Natural killer cell (primary cell): ENCODE measurements at regions of chr3 and their contacts with region 1.

Region 1: GRCh38 chr3:184335661-184336546 is 1.5 kb upstream of the FAM131A start:
- DNase-seq: peak; percentile 94
- ATAC-seq: peak; percentile 77 to 88 (median 83)
- H3K4me3 ChIP-seq: peak overlapping the region; percentile 51
- H3K4me3 Mint-ChIP-seq: peak overlapping the region; percentile 90
- H3K27ac ChIP-seq: peak overlapping the region; percentile 97
- H3K27ac Mint-ChIP-seq: peak overlapping the region; percentile 78 to 80
- H3K4me1 ChIP-seq: peaks cover 23% of the 10 kb centered on the region
- H3K4me1 Mint-ChIP-seq: peaks cover 17 to 41% of the 10 kb centered on the region in 2 donors
- H3K27me3 ChIP-seq: no peaks in the 10 kb centered on the region
- H3K27me3 Mint-ChIP-seq: peaks cover 0 to 7% of the 10 kb centered on the region in 2 donors
- CTCF ChIP-seq: no peak

Region 2: GRCh38 chr3:184320099-184320445 is 15.8 kb before region 1 on chr3:
- intact Hi-C with region 1: loop called (anchors 2 kb)
- DNase-seq: peak in 1 of 2 donors; percentile 27
- ATAC-seq: peak in 2 of 3 donors; percentile 14 to 37
- H3K4me3 ChIP-seq: no peak overlapping the region
- H3K4me3 Mint-ChIP-seq: no peak overlapping the region
- H3K27ac ChIP-seq: no peak overlapping the region
- H3K27ac Mint-ChIP-seq: peak overlapping the region in 1 of 2 donors; percentile 81
- H3K4me1 ChIP-seq: peaks cover 36% of the 10 kb centered on the region
- H3K4me1 Mint-ChIP-seq: peaks cover 24 to 57% of the 10 kb centered on the region in 2 donors
- H3K27me3 ChIP-seq: no peaks in the 10 kb centered on the region
- H3K27me3 Mint-ChIP-seq: no peaks in the 10 kb centered on the region
- CTCF ChIP-seq: no peak

Region 3: GRCh38 chr3:184362668-184363540 is 27.0 kb after region 1 on chr3:
- intact Hi-C with region 1: loop called (anchors 1 kb)
- DNase-seq: peak; percentile 93 to 98
- ATAC-seq: peak; percentile 76 to 88 (median 83)
- H3K4me3 ChIP-seq: peak overlapping the region; percentile 57
- H3K4me3 Mint-ChIP-seq: peak overlapping the region; percentile 99
- H3K27ac ChIP-seq: peak overlapping the region; percentile 86
- H3K27ac Mint-ChIP-seq: peak overlapping the region; percentile 96 to 97
- H3K4me1 ChIP-seq: peaks cover 32% of the 10 kb centered on the region
- H3K4me1 Mint-ChIP-seq: peaks cover 19 to 43% of the 10 kb centered on the region in 2 donors
- H3K27me3 ChIP-seq: no peaks in the 10 kb centered on the region
- H3K27me3 Mint-ChIP-seq: peaks cover 0 to 3% of the 10 kb centered on the region in 2 donors
- CTCF ChIP-seq: peak; percentile 61